Caco-2 (cell line): ENCODE measurements at regions of chr4 and their contacts with region 1.

Region 1: DNA sequence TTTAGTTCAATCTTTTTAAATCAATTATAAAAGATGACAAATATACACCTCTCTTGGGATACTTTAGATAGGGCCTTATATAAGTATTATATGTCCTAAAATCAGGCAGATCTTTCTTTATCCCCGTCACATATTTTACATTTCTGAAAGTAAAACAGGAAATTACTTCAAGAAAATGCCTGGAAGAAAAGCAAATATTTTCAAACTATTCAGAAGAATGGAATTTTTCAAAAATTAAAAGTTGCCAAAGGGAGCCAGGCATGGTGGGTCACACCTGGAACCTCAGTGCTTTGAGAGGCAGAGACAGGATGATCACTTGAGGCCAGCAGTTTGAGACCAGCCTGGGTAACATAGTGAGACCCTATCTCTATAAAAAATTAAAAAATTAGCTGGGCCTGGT is 34.4 kb downstream of the MGARP start:
- DNase-seq: no peak
- H3K4me3 ChIP-seq: no peak overlapping the region
- H3K4me3 Mint-ChIP-seq: no peak overlapping the region
- H3K27ac Mint-ChIP-seq: no peak overlapping the region
- H3K4me1 ChIP-seq: peaks cover 8% of the 10 kb centered on the region; the same call in 1 of the 2 replicates
- H3K4me1 Mint-ChIP-seq: no peaks in the 10 kb centered on the region
- H3K27me3 ChIP-seq: no peaks in the 10 kb centered on the region
- H3K27me3 Mint-ChIP-seq: no peaks in the 10 kb centered on the region
- CTCF ChIP-seq: no peak

Region 2: GRCh38 chr4:139184129-139184528 is 61.5 kb before region 1 on chr4:
- CTCF ChIA-PET with region 1: no interaction called
- POLR2A ChIA-PET with region 1: no interaction called
- intact Hi-C with region 1: no loop called
- DNase-seq: no peak
- H3K4me3 ChIP-seq: no peak overlapping the region
- H3K4me3 Mint-ChIP-seq: no peak overlapping the region
- H3K27ac Mint-ChIP-seq: no peak overlapping the region
- H3K4me1 ChIP-seq: peaks cover 8% of the 10 kb centered on the region; the same call in 1 of the 2 replicates
- H3K4me1 Mint-ChIP-seq: peaks cover 10% of the 10 kb centered on the region
- H3K27me3 ChIP-seq: no peaks in the 10 kb centered on the region
- H3K27me3 Mint-ChIP-seq: no peaks in the 10 kb centered on the region
- CTCF ChIP-seq: no peak

Region 3: GRCh38 chr4:139202991-139203390 is 42.6 kb before region 1 on chr4:
- CTCF ChIA-PET with region 1: no interaction called
- POLR2A ChIA-PET with region 1: interaction called, 11 read pairs
- intact Hi-C with region 1: no loop called
- DNase-seq: no peak
- H3K4me3 ChIP-seq: no peak overlapping the region
- H3K4me3 Mint-ChIP-seq: no peak overlapping the region
- H3K27ac Mint-ChIP-seq: no peak overlapping the region
- H3K4me1 ChIP-seq: no peaks in the 10 kb centered on the region
- H3K4me1 Mint-ChIP-seq: no peaks in the 10 kb centered on the region
- H3K27me3 ChIP-seq: no peaks in the 10 kb centered on the region
- H3K27me3 Mint-ChIP-seq: no peaks in the 10 kb centered on the region
- CTCF ChIP-seq: no peak

Region 4: GRCh38 chr4:139619644-139620043 is 374.1 kb after region 1 on chr4:
- CTCF ChIA-PET with region 1: no interaction called
- POLR2A ChIA-PET with region 1: no interaction called
- intact Hi-C with region 1: no loop called
- DNase-seq: no peak
- H3K4me3 ChIP-seq: no peak overlapping the region
- H3K4me3 Mint-ChIP-seq: no peak overlapping the region
- H3K27ac Mint-ChIP-seq: no peak overlapping the region
- H3K4me1 ChIP-seq: peaks cover 14% of the 10 kb centered on the region
- H3K4me1 Mint-ChIP-seq: peaks cover 22% of the 10 kb centered on the region
- H3K27me3 ChIP-seq: no peaks in the 10 kb centered on the region
- H3K27me3 Mint-ChIP-seq: no peaks in the 10 kb centered on the region
- CTCF ChIP-seq: peak; percentile 46 to 49